ENCODE measurements at regions of chr11 and their contacts with region 1.

Region 1: GRCh38 chr11:77047007-77047927 is 13.1 kb downstream of the B3GNT6 start:
- DNase-seq: peak; percentile 25 to 95 (median 81)
- ATAC-seq: peak; percentile 87 to 91 (median 90)
- H3K4me3 ChIP-seq: peak overlapping the region; percentile 53 to 56
- H3K4me3 Mint-ChIP-seq: peak overlapping the region; percentile 66 to 74 (median 67)
- H3K27ac ChIP-seq: peak overlapping the region; percentile 70
- H3K27ac Mint-ChIP-seq: peak overlapping the region; percentile 19 to 50
- H3K4me1 ChIP-seq: peaks cover 2 to 12% of the 10 kb centered on the region in 2 experiments
- H3K4me1 Mint-ChIP-seq: peaks cover 10 to 13% (median 13%) of the 10 kb centered on the region in 3 donors
- H3K27me3 ChIP-seq: peaks cover 0 to 19% of the 10 kb centered on the region in 2 experiments
- H3K27me3 Mint-ChIP-seq: peaks cover 12 to 17% of the 10 kb centered on the region in 2 donors

Region 2: GRCh38 chr11:76524919-76525318 is 522.3 kb before region 1 on chr11:
- CTCF ChIA-PET with region 1: no interaction called
- POLR2A ChIA-PET with region 1: no interaction called
- DNase-seq: no peak
- ATAC-seq: no peak
- H3K4me3 ChIP-seq: no peak overlapping the region
- H3K4me3 Mint-ChIP-seq: no peak overlapping the region
- H3K27ac ChIP-seq: no peak overlapping the region
- H3K27ac Mint-ChIP-seq: no peak overlapping the region
- H3K4me1 ChIP-seq: no peaks in the 10 kb centered on the region
- H3K4me1 Mint-ChIP-seq: no peaks in the 10 kb centered on the region
- H3K27me3 ChIP-seq: no peaks in the 10 kb centered on the region
- H3K27me3 Mint-ChIP-seq: no peaks in the 10 kb centered on the region

Region 3: DNA sequence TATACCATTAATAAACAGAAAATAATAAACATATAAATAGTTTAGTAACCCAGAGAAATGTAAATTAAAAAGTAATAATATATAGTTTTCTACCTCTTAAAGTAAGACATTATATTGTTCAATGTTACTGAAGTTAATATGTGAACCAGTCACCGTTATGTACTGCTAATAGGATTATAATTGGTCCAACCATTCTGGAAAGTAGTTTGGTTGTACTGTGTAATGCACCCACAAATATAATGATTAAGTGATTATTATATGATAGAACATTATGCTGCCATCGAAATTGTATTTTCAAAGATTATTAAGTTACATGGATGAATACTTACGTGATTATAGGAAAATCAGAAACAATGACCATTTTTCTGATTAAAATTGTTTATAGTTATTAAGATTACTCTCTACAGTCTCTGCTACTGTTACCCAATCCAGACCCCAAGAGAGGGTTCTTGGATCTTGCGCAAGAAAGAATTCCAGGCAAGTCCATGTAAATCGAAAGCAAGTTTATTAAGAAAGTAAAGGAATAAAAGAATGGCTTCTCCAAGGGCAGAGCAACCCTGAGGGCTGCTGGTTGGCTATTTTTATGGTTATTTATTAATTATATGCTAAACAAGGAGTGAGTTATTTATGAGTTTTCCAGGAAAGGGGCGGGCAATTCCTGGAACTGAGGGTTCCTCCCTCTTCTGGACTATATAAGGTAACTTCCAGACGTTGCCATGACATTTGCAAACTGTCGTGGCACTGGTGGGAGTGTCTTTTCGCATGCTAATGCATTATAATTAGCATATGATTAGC is 136.4 kb before region 1 on chr11:
- CTCF ChIA-PET with region 1: no interaction called
- POLR2A ChIA-PET with region 1: no interaction called
- DNase-seq: no peak
- ATAC-seq: no peak
- H3K4me3 ChIP-seq: no peak overlapping the region
- H3K4me3 Mint-ChIP-seq: no peak overlapping the region
- H3K27ac ChIP-seq: no peak overlapping the region
- H3K27ac Mint-ChIP-seq: no peak overlapping the region
- H3K4me1 ChIP-seq: no peaks in the 10 kb centered on the region
- H3K4me1 Mint-ChIP-seq: no peaks in the 10 kb centered on the region
- H3K27me3 ChIP-seq: no peaks in the 10 kb centered on the region
- H3K27me3 Mint-ChIP-seq: no peaks in the 10 kb centered on the region

Region 4: DNA sequence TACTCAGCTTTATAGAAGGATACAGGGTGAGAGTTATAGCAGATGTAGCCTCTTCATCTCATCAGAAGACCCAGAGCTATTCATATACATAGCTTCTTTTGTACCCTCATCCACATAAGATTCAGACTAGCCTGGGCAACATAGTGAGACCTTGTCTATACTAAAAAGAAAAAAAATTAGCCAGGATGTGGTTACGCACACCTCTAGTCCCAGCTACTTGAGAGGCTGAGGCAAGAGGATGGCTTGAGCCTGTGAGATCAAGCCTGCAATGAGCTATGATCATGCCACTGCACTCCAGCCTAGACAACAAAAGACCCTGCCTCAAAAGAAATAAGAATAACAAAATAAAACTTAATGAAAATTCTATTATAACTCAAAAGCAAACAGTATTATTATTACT is 49.8 kb before region 1 on chr11:
- CTCF ChIA-PET with region 1: interaction called in 1 of 2 experiments, 10 read pairs
- POLR2A ChIA-PET with region 1: no interaction called
- DNase-seq: peak in 1 of 35 experiments; percentile 2
- ATAC-seq: peak in 2 of 4 experiments; percentile 30 to 35
- H3K4me3 ChIP-seq: no peak overlapping the region
- H3K4me3 Mint-ChIP-seq: no peak overlapping the region
- H3K27ac ChIP-seq: no peak overlapping the region
- H3K27ac Mint-ChIP-seq: no peak overlapping the region
- H3K4me1 ChIP-seq: peaks cover 0 to 2% of the 10 kb centered on the region in 2 experiments
- H3K4me1 Mint-ChIP-seq: peaks cover 0 to 4% (median 4%) of the 10 kb centered on the region in 3 donors
- H3K27me3 ChIP-seq: no peaks in the 10 kb centered on the region
- H3K27me3 Mint-ChIP-seq: no peaks in the 10 kb centered on the region

Region 5: DNA sequence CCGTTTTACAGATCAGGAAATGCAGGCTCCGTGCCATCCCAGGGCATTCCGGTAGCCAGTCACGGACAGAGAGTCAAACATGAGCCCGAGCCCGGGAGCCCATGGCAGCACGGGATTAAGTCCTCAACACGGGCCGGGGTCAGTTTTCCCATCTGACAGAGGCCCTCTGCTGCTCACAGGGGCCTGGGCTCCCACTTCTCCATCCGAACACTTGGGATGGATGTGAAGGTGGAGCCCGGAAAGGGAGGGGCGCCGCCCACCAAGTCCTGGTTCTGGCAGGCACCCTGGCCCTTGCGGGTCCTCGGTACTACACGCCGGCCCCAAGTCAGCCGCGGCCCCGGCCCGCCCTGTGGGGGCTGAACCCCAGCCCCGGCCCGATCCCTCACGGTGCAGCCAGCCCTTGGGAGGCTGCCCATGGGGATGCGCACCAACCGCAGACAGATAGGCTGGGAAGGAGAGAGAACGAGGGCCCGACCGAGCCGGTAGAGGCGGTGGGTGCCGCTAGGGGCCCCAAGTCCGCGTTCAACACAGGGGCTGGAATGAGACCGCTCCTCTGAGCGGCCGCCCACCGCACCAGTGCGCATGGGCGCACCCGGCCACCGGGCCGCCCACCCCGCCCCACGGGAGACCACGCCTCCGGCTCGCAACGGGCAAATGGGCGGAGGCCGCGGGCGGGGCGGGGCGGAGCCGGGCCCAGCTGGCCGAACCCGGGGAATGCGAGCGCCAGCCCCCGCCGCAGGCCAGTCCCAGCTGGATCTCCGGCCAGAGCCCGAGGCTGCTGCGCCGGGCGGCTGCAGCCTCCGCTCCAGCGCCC is 19.2 kb after region 1 on chr11 and contains the start of gene CAPN5:
- CTCF ChIA-PET with region 1: interaction called in 1 of 2 experiments, 14 read pairs
- POLR2A ChIA-PET with region 1: interaction called, 6 to 9 read pairs
- DNase-seq: peak; percentile 51 to 93 (median 78)
- ATAC-seq: peak; percentile 89 to 96 (median 92)
- H3K4me3 ChIP-seq: peak within 1 kb of the TSS; percentile 65 to 73
- H3K4me3 Mint-ChIP-seq: peak within 1 kb of the TSS; percentile 83 to 93 (median 88)
- H3K27ac ChIP-seq: no peak within 1 kb of the TSS
- H3K27ac Mint-ChIP-seq: peak within 1 kb of the TSS in 1 of 2 donors; percentile 74
- H3K4me1 ChIP-seq: peaks cover 3 to 23% of the 10 kb centered on the region in 2 experiments
- H3K4me1 Mint-ChIP-seq: peaks cover 10 to 17% (median 11%) of the 10 kb centered on the region in 3 donors
- H3K27me3 ChIP-seq: peaks cover 0 to 9% of the 10 kb centered on the region in 2 experiments
- H3K27me3 Mint-ChIP-seq: no peaks in the 10 kb centered on the region
- total RNA-seq, gene CAPN5: 3.1 to 6.4 (median 4.0) TPM

Region 6: DNA sequence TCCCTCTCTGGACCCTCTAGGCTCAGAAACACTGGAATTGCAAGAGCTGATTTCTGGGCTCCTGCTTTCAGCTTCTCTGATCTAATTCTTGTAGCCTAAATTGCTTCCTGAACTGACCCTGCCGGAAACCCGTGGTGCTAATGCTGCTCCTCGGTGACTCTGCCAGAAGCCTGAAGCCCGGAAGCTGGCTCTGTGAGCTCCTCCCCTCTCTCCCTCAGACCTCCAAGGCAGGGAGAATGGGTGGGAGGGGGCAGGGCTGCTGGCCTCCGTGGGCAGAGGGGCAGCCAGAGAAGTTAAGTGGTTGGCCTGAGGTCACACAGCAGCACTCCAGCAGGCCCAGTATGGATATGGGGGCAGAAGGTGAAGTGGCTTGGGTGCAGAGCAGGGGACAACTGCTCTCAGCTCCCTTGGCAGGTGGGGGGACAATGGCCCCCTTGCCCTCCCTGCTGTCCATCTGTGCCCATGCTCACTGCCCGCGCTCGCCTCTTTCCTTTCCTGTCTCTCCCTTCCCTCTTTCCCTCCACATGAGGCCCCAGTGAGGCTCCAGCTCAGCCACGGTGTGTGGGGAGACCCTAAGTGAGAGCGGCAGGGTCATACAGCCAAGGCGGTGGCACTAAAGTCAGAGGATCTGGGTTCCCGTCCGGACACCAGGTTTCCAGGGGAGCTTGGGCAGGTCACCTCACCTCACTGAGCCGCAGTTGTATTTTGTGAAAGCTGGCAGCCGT is 35.7 kb after region 1 on chr11:
- CTCF ChIA-PET with region 1: interaction called in 1 of 2 experiments, 3 read pairs
- POLR2A ChIA-PET with region 1: interaction called, 3 to 11 read pairs
- DNase-seq: peak; percentile 13 to 63 (median 43)
- ATAC-seq: peak; percentile 90 to 96 (median 94)
- H3K4me3 ChIP-seq: peak overlapping the region; percentile 27 to 50
- H3K4me3 Mint-ChIP-seq: peak overlapping the region; percentile 64 to 75 (median 73)
- H3K27ac ChIP-seq: peak overlapping the region; percentile 83
- H3K27ac Mint-ChIP-seq: peak overlapping the region; percentile 98 to 99
- H3K4me1 ChIP-seq: peaks cover 6 to 30% of the 10 kb centered on the region in 2 experiments
- H3K4me1 Mint-ChIP-seq: peaks cover 18 to 30% (median 22%) of the 10 kb centered on the region in 3 donors
- H3K27me3 ChIP-seq: no peaks in the 10 kb centered on the region
- H3K27me3 Mint-ChIP-seq: no peaks in the 10 kb centered on the region

Region 7: DNA sequence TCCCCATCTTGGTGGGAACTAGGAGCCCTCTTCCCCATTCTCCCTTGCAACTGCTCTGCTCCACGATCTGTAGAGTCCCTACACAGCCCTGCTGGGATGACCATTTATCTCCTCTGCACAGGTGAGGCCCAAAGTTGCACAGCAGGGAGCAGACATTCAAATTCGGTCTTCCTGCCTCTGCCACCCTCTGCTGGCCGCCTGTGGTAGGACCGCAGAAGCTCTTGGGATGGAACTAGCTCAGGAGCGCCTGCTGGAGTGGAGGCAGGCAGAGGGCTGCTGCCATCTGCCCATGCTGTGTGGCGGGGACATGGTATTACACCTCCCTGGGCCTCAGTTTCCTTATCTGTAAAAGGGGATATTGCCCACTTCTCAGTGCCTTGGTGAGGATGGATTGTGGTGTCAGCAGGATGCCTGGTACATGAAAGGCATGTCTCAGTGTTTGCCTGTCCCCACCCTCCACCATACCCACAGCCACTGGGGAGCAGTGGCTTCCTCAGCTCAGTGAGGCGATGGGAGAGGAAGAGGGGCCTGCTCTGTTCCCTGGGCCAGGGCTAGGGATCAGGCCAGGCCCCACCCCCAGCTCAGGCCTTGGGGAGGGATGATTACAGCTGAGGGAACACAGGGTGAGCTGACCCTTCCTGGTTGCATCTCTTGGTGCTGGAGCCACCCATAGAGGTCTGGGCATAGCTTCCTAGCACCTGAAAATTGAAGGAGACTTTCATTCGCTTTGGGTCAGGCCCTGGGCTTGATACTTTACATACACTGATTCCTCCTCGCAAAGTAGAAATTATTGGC is 44.1 kb after region 1 on chr11:
- CTCF ChIA-PET with region 1: interaction called, 13 to 79 read pairs
- POLR2A ChIA-PET with region 1: interaction called, 3 to 4 read pairs
- DNase-seq: peak; percentile 55 to 85 (median 74)
- ATAC-seq: peak; percentile 91 to 99 (median 95)
- H3K4me3 ChIP-seq: no peak overlapping the region
- H3K4me3 Mint-ChIP-seq: no peak overlapping the region
- H3K27ac ChIP-seq: no peak overlapping the region
- H3K27ac Mint-ChIP-seq: peak overlapping the region in 1 of 2 donors; percentile 70
- H3K4me1 ChIP-seq: peaks cover 0 to 8% of the 10 kb centered on the region in 2 experiments
- H3K4me1 Mint-ChIP-seq: peaks cover 4 to 6% (median 4%) of the 10 kb centered on the region in 3 donors
- H3K27me3 ChIP-seq: peaks cover 0 to 5% of the 10 kb centered on the region in 2 experiments
- H3K27me3 Mint-ChIP-seq: no peaks in the 10 kb centered on the region

Region 8: GRCh38 chr11:77147668-77148321 is 100.5 kb after region 1 on chr11:
- CTCF ChIA-PET with region 1: no interaction called
- POLR2A ChIA-PET with region 1: no interaction called
- DNase-seq: peak in 28 of 35 experiments; percentile 10 to 53 (median 27)
- ATAC-seq: peak; percentile 53 to 80 (median 62)
- H3K4me3 ChIP-seq: peak overlapping the region; percentile 12 to 55
- H3K4me3 Mint-ChIP-seq: peak overlapping the region; percentile 62 to 70 (median 63)
- H3K27ac ChIP-seq: no peak overlapping the region
- H3K27ac Mint-ChIP-seq: peak overlapping the region; percentile 28 to 31
- H3K4me1 ChIP-seq: peaks cover 11 to 34% of the 10 kb centered on the region in 2 experiments
- H3K4me1 Mint-ChIP-seq: peaks cover 31 to 45% (median 35%) of the 10 kb centered on the region in 3 donors
- H3K27me3 ChIP-seq: peaks cover 0 to 3% of the 10 kb centered on the region in 2 experiments
- H3K27me3 Mint-ChIP-seq: no peaks in the 10 kb centered on the region

Region 9: DNA sequence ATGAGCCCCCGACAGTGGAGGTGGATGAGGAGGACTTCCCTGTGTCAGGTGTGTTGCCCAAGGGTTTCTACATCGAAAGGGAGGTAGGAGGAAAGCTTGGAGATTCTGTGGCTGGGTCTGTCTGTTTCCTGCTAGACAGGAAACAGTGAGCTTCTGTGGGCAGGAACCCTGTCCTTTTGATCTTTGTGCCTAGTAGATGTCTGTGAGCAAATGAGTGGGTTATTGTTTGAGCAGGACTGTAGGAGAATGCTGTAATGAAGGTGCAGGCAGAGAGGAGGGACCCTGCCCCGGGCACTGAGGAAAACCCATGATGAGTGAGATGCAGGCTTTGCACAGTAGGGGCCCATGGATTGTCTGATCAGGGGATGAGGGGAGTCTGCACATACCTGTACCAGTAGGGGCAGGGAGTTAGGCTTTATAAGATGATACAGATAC is 1155.5 kb after region 1 on chr11:
- CTCF ChIA-PET with region 1: no interaction called
- POLR2A ChIA-PET with region 1: interaction called in 1 of 2 experiments, 11 read pairs
- DNase-seq: peak; percentile 27 to 88 (median 61)
- ATAC-seq: peak; percentile 83 to 91 (median 89)
- H3K4me3 ChIP-seq: peak overlapping the region; percentile 35 to 62
- H3K4me3 Mint-ChIP-seq: peak overlapping the region; percentile 73 to 85 (median 84)
- H3K27ac ChIP-seq: peak overlapping the region; percentile 80
- H3K27ac Mint-ChIP-seq: peak overlapping the region; percentile 96 to 97
- H3K4me1 ChIP-seq: peaks cover 36 to 68% of the 10 kb centered on the region in 2 experiments
- H3K4me1 Mint-ChIP-seq: peaks cover 46 to 54% (median 48%) of the 10 kb centered on the region in 3 donors
- H3K27me3 ChIP-seq: no peaks in the 10 kb centered on the region
- H3K27me3 Mint-ChIP-seq: no peaks in the 10 kb centered on the region